ENCODE measurements at regions of chr19 and their contacts with region 1.

Region 1: GRCh38 chr19:46614114-46614722 is 10.7 kb downstream of the PTGIR start:
- DNase-seq: peak; percentile 86 to 91
- H3K4me3 ChIP-seq: no peak overlapping the region
- H3K27ac ChIP-seq: peak overlapping the region in 1 of 2 donors; percentile 42
- H3K4me1 ChIP-seq: peaks cover 7 to 34% (median 27%) of the 10 kb centered on the region in 4 donors
- H3K27me3 ChIP-seq: no peaks in the 10 kb centered on the region
- CTCF ChIP-seq: peak; percentile 92 to 93

Region 2: DNA sequence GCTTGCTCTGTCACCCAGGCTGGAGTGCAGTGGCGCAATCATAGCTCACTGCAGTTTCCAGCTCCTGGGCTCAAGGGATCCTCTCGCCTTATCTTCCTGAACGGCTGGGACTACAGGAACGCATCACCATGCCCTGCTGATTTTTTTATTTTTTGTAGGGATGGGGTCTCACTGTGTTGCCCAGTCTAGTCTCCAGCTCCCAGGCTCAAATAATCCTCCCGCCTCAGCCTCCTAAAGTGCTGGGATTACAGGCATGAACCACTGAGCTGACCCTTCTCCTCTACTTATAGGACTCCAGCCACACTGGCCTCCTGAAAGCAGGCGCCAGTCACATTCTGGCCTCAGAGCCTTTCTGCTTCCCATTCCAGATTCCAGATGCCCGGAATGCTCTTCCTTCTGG is 36.2 kb after region 1 on chr19:
- intact Hi-C with region 1: no loop called
- DNase-seq: no peak
- H3K4me3 ChIP-seq: no peak overlapping the region
- H3K27ac ChIP-seq: peak overlapping the region in 1 of 2 donors; percentile 8
- H3K4me1 ChIP-seq: peaks cover 0 to 57% (median 25%) of the 10 kb centered on the region in 4 donors
- H3K27me3 ChIP-seq: no peaks in the 10 kb centered on the region
- CTCF ChIP-seq: no peak

Region 3: GRCh38 chr19:46661020-46661731 is 47.0 kb after region 1 on chr19 and contains the start of gene DACT3:
- intact Hi-C with region 1: loop called (anchors 5 kb)
- DNase-seq: peak; percentile 100
- H3K4me3 ChIP-seq: peak within 1 kb of the TSS; percentile 89 to 98
- H3K27ac ChIP-seq: peak within 1 kb of the TSS; percentile 92 to 99
- H3K4me1 ChIP-seq: peaks cover 3 to 42% (median 23%) of the 10 kb centered on the region in 4 donors
- H3K27me3 ChIP-seq: no peaks in the 10 kb centered on the region
- CTCF ChIP-seq: no peak

Region 4: DNA sequence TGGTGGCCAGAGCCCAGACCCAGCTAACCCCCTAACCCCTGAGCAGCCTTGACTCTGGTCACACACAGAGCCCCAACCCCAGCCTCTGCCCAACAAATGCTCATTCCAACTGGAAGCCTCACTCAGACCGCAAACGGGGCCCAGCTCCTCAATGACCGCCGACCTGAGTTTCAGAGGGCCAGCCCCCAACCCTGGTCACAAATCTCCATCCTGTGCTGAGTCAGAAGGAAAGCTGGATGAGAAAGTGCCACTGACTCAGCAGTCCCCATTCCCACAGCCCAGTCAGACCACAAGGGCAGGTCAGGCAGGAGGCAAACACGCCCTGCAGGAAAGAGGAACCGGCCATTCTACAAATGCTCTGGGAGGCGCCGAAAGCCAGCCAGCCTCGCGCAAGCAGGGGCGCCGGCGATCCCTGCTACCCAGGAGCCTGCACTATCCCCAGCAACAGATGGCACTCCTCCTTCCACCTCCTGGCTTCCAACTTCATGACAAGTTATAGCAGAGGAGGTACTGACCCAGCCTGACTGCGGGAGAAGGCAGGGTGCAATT is 116.8 kb after region 1 on chr19:
- intact Hi-C with region 1: loop called (anchors 10 kb)
- DNase-seq: peak in 1 of 2 donors; percentile 44
- H3K4me3 ChIP-seq: no peak overlapping the region
- H3K27ac ChIP-seq: no peak overlapping the region
- H3K4me1 ChIP-seq: peaks cover 0 to 10% (median 0%) of the 10 kb centered on the region in 4 donors
- H3K27me3 ChIP-seq: no peaks in the 10 kb centered on the region
- CTCF ChIP-seq: no peak